ENCODE measurements at regions of chr1 and their contacts with region 1.

Region 1: DNA sequence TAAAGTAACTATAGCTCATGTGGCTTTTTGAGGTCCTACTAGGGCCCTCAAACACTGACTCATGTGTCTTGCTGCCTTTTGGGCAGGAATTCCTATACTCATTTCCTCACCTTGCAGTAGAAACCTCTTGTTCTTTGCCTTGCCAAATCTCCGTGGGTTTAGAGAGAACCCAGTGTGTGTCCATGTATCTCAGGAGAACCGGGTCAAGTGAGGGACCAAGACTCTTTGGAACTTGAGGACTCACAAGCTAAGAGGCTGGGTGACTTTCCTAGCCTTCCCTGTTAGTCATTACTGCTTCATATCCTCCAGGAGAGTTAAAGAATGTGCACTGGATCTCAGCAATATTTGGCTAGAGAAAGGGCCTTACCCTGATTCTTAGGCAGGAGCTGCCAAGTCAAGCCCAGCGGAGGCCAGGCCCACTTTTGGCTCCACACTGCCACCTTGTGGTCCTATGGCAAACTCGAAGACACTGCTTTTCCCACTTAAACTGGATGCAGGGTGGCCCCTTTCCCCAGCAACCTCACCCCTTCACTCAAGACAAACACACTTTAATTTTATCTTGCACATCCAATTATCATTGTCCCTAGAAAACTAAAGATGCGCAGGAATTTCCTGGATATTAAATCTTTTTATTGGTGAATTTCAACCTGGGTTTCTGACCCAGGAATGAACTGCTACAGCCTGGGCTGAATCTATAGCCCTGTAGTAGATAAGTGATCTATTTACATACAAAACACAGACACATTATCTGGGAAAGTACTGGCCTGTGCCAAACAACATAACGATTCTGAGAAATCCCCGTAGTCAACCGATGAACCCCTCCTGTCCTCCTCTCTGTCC is 10.6 kb downstream of the AVPR1B start:
- DNase-seq: peak; percentile 39
- ATAC-seq: peak; percentile 98
- H3K4me3 ChIP-seq: no peak overlapping the region
- H3K27ac ChIP-seq: no peak overlapping the region
- H3K4me1 ChIP-seq: no peaks in the 10 kb centered on the region
- H3K27me3 ChIP-seq: peaks cover 0 to 2% of the 10 kb centered on the region in 2 experiments; a peak in 2 of 4 replicates
- CTCF ChIP-seq: peak; percentile 83 to 96 (median 87)
- EP300 ChIP-seq: no peak
- POLR2A ChIP-seq: no peak
- RAD21 ChIP-seq: peak; percentile 98

Region 2: DNA sequence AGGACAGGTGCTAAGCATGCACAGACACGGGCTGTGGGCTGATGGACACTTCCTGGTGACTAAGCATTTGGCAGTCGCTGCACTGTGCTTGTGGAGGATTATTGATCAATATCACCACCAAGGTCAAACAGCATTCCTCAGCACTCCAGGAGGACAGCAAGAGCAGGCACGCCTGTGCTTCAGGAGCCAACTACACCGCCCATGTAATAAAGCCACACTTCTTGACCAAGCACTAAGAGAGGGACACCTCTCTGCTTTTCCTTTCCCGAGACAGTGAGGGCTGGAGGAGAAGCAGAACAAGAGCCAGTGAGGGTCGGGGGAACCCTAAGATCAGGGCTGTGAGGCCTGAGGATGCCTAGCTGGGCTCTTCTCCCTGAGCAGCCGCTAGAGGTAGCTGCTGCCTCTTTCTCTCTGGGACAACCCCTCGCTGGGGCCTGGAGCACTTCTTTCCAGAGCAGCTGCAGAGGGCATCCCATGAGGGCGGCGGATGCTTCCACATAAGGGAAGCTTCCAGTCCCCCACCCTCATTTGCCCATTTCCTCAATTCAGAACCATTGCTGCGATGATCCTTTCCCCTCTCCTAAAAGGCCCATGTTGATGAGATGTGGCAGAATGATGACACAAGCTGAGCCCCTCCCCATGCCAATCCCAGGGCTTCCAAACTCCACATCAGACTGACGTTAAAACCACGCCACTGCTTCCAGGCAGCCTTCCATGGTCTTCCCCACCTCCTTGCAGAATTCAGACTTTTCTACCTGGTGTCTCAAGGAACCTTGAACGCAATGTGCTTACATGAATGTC is 122.4 kb before region 1 on chr1:
- CTCF ChIA-PET with region 1: interaction called, 296 read pairs
- POLR2A ChIA-PET with region 1: interaction called, 4 read pairs
- RAD21 ChIA-PET with region 1: interaction called, 197 read pairs
- SMC1A ChIA-PET with region 1: interaction called, 98 read pairs
- in situ Hi-C with region 1: loop called (anchors 5 kb)
- intact Hi-C with region 1: loop called (anchors 1 kb)
- DNase-seq: no peak
- ATAC-seq: peak; percentile 98
- H3K4me3 ChIP-seq: no peak overlapping the region
- H3K27ac ChIP-seq: no peak overlapping the region
- H3K4me1 ChIP-seq: no peaks in the 10 kb centered on the region
- H3K27me3 ChIP-seq: no peaks in the 10 kb centered on the region; a peak in 2 of 4 replicates
- CTCF ChIP-seq: peak; percentile 85 to 90 (median 88)
- EP300 ChIP-seq: no peak
- POLR2A ChIP-seq: no peak
- RAD21 ChIP-seq: peak; percentile 90

Region 3: GRCh38 chr1:206041640-206042039 is 64.9 kb before region 1 on chr1:
- CTCF ChIA-PET with region 1: interaction called, 18 read pairs
- POLR2A ChIA-PET with region 1: no interaction called
- RAD21 ChIA-PET with region 1: interaction called, 13 read pairs
- SMC1A ChIA-PET with region 1: interaction called, 11 read pairs
- in situ Hi-C with region 1: no loop called
- intact Hi-C with region 1: no loop called
- DNase-seq: no peak
- ATAC-seq: peak; percentile 84
- H3K4me3 ChIP-seq: no peak overlapping the region
- H3K27ac ChIP-seq: peak overlapping the region; percentile 35
- H3K4me1 ChIP-seq: peaks cover 48% of the 10 kb centered on the region
- H3K27me3 ChIP-seq: no peaks in the 10 kb centered on the region; a peak in 1 of 4 replicates
- CTCF ChIP-seq: no peak
- EP300 ChIP-seq: no peak
- POLR2A ChIP-seq: no peak
- RAD21 ChIP-seq: no peak

Region 4: DNA sequence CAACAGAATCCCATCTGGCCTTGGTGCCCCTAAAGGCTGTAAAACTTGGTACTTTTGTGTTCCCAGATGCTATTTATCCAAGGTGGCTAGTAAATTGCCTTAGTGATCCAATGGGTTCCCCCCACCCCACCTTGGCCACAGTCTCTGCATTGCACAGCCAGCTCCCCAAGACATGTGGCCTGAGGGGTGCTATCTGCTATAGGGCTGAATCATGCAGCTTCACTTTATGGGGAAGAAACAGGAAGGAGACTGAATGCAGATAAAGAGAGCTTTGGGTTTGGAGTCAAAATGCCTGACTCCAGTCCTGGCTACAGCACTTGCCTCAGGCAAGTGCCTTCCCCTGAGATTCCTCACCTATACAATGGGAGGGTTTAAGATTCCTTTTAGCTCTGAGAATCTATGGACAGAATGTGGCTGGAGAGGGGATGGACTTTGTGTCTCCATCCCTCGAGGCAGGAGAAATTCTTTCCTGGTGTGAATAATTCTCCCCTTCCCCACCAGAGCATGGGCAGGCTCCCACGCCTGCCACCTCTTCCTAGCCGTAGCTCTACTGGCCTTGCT is 47.1 kb before region 1 on chr1:
- CTCF ChIA-PET with region 1: interaction called, 27 read pairs
- POLR2A ChIA-PET with region 1: no interaction called
- RAD21 ChIA-PET with region 1: interaction called, 9 read pairs
- SMC1A ChIA-PET with region 1: interaction called, 13 read pairs
- in situ Hi-C with region 1: no loop called
- intact Hi-C with region 1: no loop called
- DNase-seq: no peak
- ATAC-seq: peak; percentile 36
- H3K4me3 ChIP-seq: no peak overlapping the region
- H3K27ac ChIP-seq: no peak overlapping the region; the same call in 1 of the 2 replicates
- H3K4me1 ChIP-seq: peaks cover 10% of the 10 kb centered on the region
- H3K27me3 ChIP-seq: no peaks in the 10 kb centered on the region
- CTCF ChIP-seq: no peak
- EP300 ChIP-seq: no peak
- POLR2A ChIP-seq: no peak; the same call in 1 of the 2 replicates
- RAD21 ChIP-seq: no peak

Region 5: GRCh38 chr1:206503591-206504362 is 397.2 kb after region 1 on chr1:
- CTCF ChIA-PET with region 1: no interaction called
- POLR2A ChIA-PET with region 1: no interaction called
- RAD21 ChIA-PET with region 1: no interaction called
- SMC1A ChIA-PET with region 1: no interaction called
- in situ Hi-C with region 1: no loop called
- intact Hi-C with region 1: no loop called
- DNase-seq: peak; percentile 95
- ATAC-seq: peak; percentile 72
- H3K4me3 ChIP-seq: peak overlapping the region; percentile 33; the same call in 1 of the 2 replicates
- H3K27ac ChIP-seq: peak overlapping the region; percentile 60
- H3K4me1 ChIP-seq: peaks cover 42% of the 10 kb centered on the region
- H3K27me3 ChIP-seq: no peaks in the 10 kb centered on the region
- CTCF ChIP-seq: no peak
- EP300 ChIP-seq: peak; percentile 52 to 58; a peak in 3 of 4 replicates
- POLR2A ChIP-seq: no peak
- RAD21 ChIP-seq: no peak